HAP-1 (cell line): ENCODE measurements at regions of chr1 and their contacts with region 1.

Region 1: DNA sequence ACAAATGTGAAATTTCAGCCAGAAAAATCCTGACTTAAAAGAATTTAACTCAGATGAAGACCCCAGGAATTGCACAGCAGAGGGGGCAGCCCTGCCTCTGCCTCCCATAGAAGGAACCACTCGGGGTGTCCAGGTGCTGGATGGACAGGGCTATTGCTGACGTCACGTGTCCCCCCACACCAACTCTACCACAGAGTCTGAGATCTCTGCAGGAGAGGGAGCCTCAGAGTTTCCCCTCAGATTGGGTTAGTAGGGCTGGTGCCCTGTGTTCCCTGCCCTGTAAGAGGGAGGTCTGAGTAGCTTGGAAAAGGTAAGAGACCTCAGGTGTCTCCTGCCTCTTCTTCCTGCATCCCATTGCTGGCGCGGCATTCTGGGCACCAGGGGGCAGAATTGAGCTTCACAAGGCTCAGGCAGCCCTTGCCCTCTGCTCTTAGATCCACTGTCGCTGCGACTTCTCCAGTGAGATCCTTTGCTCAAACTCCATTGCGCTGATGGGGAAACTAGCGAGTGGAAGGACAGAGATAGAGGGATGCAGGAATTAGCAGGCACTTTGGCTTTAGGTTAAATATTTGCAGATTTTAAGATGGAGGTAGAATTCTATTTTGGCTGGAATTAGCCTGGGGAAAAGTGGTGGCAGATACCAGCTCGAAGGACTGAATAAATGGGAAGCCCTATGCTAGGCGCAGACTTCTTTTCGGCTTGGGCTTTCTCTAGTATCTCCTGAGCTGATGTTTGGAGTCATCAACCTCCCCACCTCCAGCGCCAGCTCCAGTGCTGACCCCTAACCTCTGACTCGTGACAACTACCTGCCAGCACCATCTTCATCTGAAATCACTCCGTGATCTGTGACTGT is 42.8 kb upstream of the DMBX1 start:
- DNase-seq: peak; percentile 66 to 91
- H3K4me3 ChIP-seq: no peak overlapping the region
- H3K4me1 ChIP-seq: peaks cover 11% of the 10 kb centered on the region
- H3K27me3 ChIP-seq: peaks cover 28% of the 10 kb centered on the region

Region 2: DNA sequence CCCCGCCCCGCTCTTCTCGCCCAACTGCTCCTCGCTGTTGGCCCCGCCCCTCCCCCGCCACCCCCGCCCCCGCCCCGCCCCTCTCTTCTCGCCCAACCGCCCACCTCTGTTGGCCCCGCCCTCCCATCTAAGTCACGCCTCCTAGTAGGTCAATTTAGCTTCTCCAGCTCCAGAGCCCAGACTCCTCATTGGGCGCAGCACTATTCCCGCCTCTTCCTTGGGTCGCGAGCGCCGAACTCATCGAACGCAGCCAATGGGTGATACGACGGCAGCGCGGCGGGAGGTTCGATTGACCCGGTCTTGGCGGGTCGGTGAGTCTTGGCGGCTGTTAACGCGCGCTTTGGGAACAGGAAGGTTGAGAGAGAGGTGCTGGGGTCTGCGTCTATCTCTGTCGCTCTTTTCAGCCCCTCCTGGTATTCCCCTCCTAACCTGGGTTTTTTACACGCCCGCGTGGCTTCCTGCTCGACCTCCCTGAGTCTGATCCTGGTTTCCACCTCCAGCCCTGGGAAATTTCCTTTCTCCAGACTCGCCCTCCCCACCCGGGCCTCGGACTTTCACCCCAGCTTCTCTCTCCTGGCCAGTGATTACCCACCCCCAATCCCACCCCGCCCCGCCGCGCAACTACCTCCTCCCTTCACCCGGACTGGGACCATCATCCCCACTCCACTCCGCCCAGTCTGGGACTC is 199.3 kb before region 1 on chr1 and contains the start of gene RAD54L:
- in situ Hi-C with region 1: no loop called
- DNase-seq: peak; percentile 97 to 99
- H3K4me3 ChIP-seq: peak within 1 kb of the TSS; percentile 95
- H3K4me1 ChIP-seq: peaks cover 15% of the 10 kb centered on the region
- H3K27me3 ChIP-seq: no peaks in the 10 kb centered on the region

Region 3: DNA sequence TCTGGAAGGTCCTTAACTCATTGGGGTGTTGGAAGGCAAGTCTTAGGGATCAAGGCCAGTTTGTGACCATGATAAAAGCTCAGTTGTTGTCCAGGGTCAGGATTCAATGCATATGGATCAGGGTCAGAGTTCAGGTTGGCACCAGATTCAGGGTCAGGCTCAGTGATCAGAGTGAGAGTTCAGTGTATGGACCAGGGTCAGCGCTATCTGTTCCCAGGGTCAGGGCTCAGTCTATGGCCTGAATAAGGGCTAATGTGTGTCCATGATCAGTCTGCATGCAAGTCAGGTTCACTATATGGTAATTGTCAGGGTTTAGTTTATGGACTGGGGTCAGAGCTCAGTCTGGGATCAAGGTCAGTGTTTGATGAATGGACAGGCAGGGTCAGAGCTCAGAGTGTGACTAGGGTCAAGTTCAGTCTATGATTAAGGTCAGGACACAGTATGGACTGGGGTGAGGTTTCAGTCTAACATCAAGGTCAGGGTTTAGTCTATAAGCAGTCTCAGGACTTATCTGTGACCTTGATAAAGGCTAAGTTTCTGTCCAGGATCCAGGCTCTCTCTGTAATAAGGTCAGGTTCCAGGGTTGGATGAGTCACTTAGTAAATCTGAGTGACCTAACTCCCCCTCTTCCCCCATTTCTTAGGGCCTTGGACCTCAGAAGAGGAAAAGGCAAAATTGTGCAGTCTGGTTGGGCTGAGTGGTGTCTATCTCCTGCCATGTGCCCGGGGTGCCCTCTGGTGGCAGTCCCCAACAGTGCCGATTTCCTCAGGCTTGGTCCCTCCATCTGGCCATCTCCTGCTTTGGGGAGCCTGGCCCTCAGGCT is 80.8 kb after region 1 on chr1:
- in situ Hi-C with region 1: loop called (anchors 5 kb)
- DNase-seq: peak; percentile 50 to 88
- H3K4me3 ChIP-seq: no peak overlapping the region
- H3K4me1 ChIP-seq: peaks cover 3% of the 10 kb centered on the region; the same call in 1 of the 2 replicates
- H3K27me3 ChIP-seq: peaks cover 10% of the 10 kb centered on the region